Gastrocnemius medialis (tissue), 4 donors: ENCODE measurements at regions of chr12 and their contacts with region 1.

Region 1: DNA sequence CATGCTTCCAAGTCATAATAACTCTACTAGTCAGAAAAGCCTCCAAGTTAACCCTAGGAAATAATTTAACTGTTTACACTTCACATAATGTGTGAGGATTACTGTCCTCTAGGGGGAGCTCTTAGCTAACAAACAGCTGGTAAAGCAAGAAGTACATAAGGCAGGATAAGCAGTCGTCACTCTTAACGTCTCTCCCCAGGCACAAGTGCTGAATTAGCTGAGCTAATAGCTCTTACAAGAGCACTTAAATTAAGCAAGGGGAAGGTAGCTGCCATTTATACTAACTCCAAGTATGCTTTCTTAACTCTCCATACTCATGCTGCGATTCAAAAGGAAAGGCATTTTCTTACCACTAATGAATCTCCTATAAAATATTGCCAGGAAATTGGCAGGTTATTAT is 79.3 kb upstream of the TSPAN11 start:
- DNase-seq: no peak
- ATAC-seq: no peak
- H3K4me3 ChIP-seq: no peak overlapping the region
- H3K27ac ChIP-seq: no peak overlapping the region
- H3K4me1 ChIP-seq: no peaks in the 10 kb centered on the region
- H3K27me3 ChIP-seq: no peaks in the 10 kb centered on the region
- CTCF ChIP-seq: peak; percentile 45 to 71 (median 63)
- POLR2A ChIP-seq: no peak

Region 2: DNA sequence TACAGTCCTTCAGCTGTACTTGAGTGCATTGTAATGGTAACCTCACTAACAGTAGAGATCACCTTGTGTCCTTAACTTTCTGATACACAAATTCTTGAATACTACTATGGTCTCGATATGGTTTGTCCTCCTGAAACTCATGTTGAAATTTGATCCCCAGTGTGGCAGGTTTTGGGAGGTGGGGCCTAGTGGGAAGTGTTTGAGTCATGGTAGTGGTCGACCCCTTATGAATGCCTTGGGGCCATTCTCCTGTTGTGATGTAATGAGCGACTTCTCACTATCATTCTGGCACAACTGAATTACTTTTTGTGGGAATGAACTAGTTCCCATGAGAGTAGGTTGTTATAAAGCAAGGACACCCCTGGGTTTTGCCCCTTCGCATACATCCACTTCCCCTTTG is 203.9 kb before region 1 on chr12:
- in situ Hi-C with region 1: no loop called
- intact Hi-C with region 1: no loop called
- DNase-seq: no peak
- ATAC-seq: no peak
- H3K4me3 ChIP-seq: no peak overlapping the region
- H3K27ac ChIP-seq: no peak overlapping the region
- H3K4me1 ChIP-seq: no peaks in the 10 kb centered on the region
- H3K27me3 ChIP-seq: no peaks in the 10 kb centered on the region
- CTCF ChIP-seq: no peak
- POLR2A ChIP-seq: no peak

Region 3: GRCh38 chr12:30985814-30986452 is 138.7 kb after region 1 on chr12:
- in situ Hi-C with region 1: no loop called
- intact Hi-C with region 1: loop called (anchors 1 kb)
- DNase-seq: no peak
- ATAC-seq: no peak
- H3K4me3 ChIP-seq: no peak overlapping the region
- H3K27ac ChIP-seq: no peak overlapping the region
- H3K4me1 ChIP-seq: no peaks in the 10 kb centered on the region
- H3K27me3 ChIP-seq: no peaks in the 10 kb centered on the region
- CTCF ChIP-seq: peak in 4 of 5 experiments; percentile 19 to 42 (median 39)
- POLR2A ChIP-seq: no peak

Region 4: GRCh38 chr12:31238764-31239387 is 391.6 kb after region 1 on chr12:
- in situ Hi-C with region 1: loop called in 1 of 4 experiments (anchors 25 kb)
- intact Hi-C with region 1: loop called (anchors 10 kb)
- DNase-seq: peak in 1 of 2 donors; percentile 34
- ATAC-seq: peak in 1 of 2 donors; percentile 69
- H3K4me3 ChIP-seq: no peak overlapping the region
- H3K27ac ChIP-seq: no peak overlapping the region
- H3K4me1 ChIP-seq: no peaks in the 10 kb centered on the region
- H3K27me3 ChIP-seq: no peaks in the 10 kb centered on the region
- CTCF ChIP-seq: peak; percentile 27 to 57 (median 51)
- POLR2A ChIP-seq: no peak

Region 5: DNA sequence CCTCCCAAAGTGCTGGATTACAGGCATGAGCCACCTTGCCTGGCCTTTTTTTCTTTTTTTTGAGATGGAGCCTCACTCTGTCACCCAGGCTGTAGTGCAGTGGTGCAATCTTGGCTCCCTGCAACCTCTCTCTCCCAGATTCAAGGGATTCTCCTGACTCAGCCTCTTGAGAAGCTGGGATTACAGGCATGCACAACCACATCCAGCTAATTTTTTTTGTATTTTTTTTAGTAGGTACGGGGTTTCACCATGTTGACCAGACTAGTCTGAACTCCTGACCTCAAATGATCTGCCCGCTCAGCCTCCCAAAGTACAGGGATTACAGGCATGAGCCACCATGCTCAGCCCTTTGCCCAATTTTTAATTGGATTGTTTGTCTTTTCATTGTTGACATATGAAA is 420.7 kb after region 1 on chr12:
- in situ Hi-C with region 1: loop called in 2 of 4 experiments (anchors 10 kb)
- intact Hi-C with region 1: loop called (anchors 2 kb)
- DNase-seq: no peak
- ATAC-seq: no peak
- H3K4me3 ChIP-seq: no peak overlapping the region
- H3K27ac ChIP-seq: no peak overlapping the region
- H3K4me1 ChIP-seq: no peaks in the 10 kb centered on the region
- H3K27me3 ChIP-seq: no peaks in the 10 kb centered on the region
- CTCF ChIP-seq: no peak
- POLR2A ChIP-seq: no peak

Region 6: GRCh38 chr12:31274520-31275300 is 427.5 kb after region 1 on chr12:
- in situ Hi-C with region 1: loop called in 2 of 4 experiments (anchors 10 kb)
- intact Hi-C with region 1: loop called (anchors 2 kb)
- DNase-seq: no peak
- ATAC-seq: no peak
- H3K4me3 ChIP-seq: no peak overlapping the region
- H3K27ac ChIP-seq: no peak overlapping the region
- H3K4me1 ChIP-seq: no peaks in the 10 kb centered on the region
- H3K27me3 ChIP-seq: no peaks in the 10 kb centered on the region
- CTCF ChIP-seq: no peak
- POLR2A ChIP-seq: no peak

Region 7: GRCh38 chr12:31629756-31630732 is 782.8 kb after region 1 on chr12:
- in situ Hi-C with region 1: no loop called
- intact Hi-C with region 1: loop called (anchors 10 kb)
- DNase-seq: peak; percentile 32 to 48
- ATAC-seq: peak; percentile 89 to 98
- H3K4me3 ChIP-seq: peak overlapping the region in 2 of 4 donors; percentile 28 to 46
- H3K27ac ChIP-seq: peak overlapping the region; percentile 53 to 66 (median 57)
- H3K4me1 ChIP-seq: peaks cover 10 to 12% of the 10 kb centered on the region in 2 donors
- H3K27me3 ChIP-seq: no peaks in the 10 kb centered on the region
- CTCF ChIP-seq: no peak
- POLR2A ChIP-seq: no peak